ENCODE measurements at regions of chr4 and their contacts with region 1.

Region 1: GRCh38 chr4:44678094-44679041 is at the start of gene GUF1:
- DNase-seq: peak; percentile 79 to 96 (median 82)
- ATAC-seq: peak; percentile 88
- H3K4me3 ChIP-seq: peak within 1 kb of the TSS; percentile 68
- H3K27ac ChIP-seq: peak within 1 kb of the TSS; percentile 82
- H3K4me1 ChIP-seq: peaks cover 0 to 13% of the 10 kb centered on the region in 2 experiments; a peak in 2 of 5 replicates
- H3K27me3 ChIP-seq: no peaks in the 10 kb centered on the region
- CTCF ChIP-seq: no peak
- EP300 ChIP-seq: no peak
- POLR2A ChIP-seq: peak; percentile 94
- RAD21 ChIP-seq: no peak
- polyA plus RNA-seq, gene GUF1: 8.1 to 13.1 TPM

Region 2: GRCh38 chr4:44532851-44533250 is 145.5 kb before region 1 on chr4:
- CTCF ChIA-PET with region 1: no interaction called
- POLR2A ChIA-PET with region 1: no interaction called
- in situ Hi-C with region 1: no loop called
- intact Hi-C with region 1: no loop called
- DNase-seq: no peak
- ATAC-seq: no peak
- H3K4me3 ChIP-seq: no peak overlapping the region
- H3K27ac ChIP-seq: no peak overlapping the region
- H3K4me1 ChIP-seq: no peaks in the 10 kb centered on the region
- H3K27me3 ChIP-seq: no peaks in the 10 kb centered on the region
- CTCF ChIP-seq: no peak
- EP300 ChIP-seq: no peak
- POLR2A ChIP-seq: no peak
- RAD21 ChIP-seq: no peak

Region 3: DNA sequence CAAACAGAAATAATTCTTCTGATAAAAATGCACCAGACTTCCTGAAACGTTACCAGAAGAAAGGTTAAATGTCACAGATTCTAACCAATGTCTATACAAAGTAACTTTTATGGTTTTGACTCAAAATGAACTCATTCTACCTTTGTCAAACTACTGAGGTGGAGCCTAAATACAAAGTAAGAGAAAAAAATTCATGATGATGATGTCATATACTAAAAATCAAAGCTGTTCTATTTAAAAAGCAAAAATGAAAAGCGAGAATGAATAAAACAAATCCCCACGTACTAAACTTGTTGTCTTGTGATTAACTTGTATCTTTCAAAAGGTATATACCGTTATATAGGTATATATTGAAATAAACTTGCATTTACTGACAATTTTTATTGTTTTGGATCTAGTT is 26.3 kb after region 1 on chr4:
- CTCF ChIA-PET with region 1: no interaction called
- POLR2A ChIA-PET with region 1: interaction called, 10 read pairs
- in situ Hi-C with region 1: no loop called
- intact Hi-C with region 1: no loop called
- DNase-seq: no peak
- ATAC-seq: no peak
- H3K4me3 ChIP-seq: no peak overlapping the region
- H3K27ac ChIP-seq: no peak overlapping the region
- H3K4me1 ChIP-seq: no peaks in the 10 kb centered on the region
- H3K27me3 ChIP-seq: no peaks in the 10 kb centered on the region
- CTCF ChIP-seq: no peak
- EP300 ChIP-seq: no peak
- POLR2A ChIP-seq: no peak
- RAD21 ChIP-seq: no peak

Region 4: GRCh38 chr4:44726262-44726871 is 48.0 kb after region 1 on chr4 and contains the start of gene GNPDA2:
- CTCF ChIA-PET with region 1: interaction called, 3 read pairs
- POLR2A ChIA-PET with region 1: interaction called, 3 read pairs
- in situ Hi-C with region 1: no loop called
- intact Hi-C with region 1: loop called (anchors 1 kb)
- DNase-seq: peak; percentile 93 to 96 (median 94)
- ATAC-seq: peak; percentile 92
- H3K4me3 ChIP-seq: peak within 1 kb of the TSS; percentile 68
- H3K27ac ChIP-seq: peak within 1 kb of the TSS; percentile 87
- H3K4me1 ChIP-seq: peaks cover 7 to 9% of the 10 kb centered on the region in 2 experiments; a peak in 4 of 5 replicates
- H3K27me3 ChIP-seq: no peaks in the 10 kb centered on the region
- CTCF ChIP-seq: peak; percentile 6 to 45 (median 30); a peak in 2 of 6 replicates
- EP300 ChIP-seq: no peak
- POLR2A ChIP-seq: peak; percentile 84
- RAD21 ChIP-seq: peak in 1 of 2 experiments; percentile 13; a peak in 1 of 4 replicates
- polyA plus RNA-seq, gene GNPDA2: 19.6 to 20.4 TPM

Region 5: DNA sequence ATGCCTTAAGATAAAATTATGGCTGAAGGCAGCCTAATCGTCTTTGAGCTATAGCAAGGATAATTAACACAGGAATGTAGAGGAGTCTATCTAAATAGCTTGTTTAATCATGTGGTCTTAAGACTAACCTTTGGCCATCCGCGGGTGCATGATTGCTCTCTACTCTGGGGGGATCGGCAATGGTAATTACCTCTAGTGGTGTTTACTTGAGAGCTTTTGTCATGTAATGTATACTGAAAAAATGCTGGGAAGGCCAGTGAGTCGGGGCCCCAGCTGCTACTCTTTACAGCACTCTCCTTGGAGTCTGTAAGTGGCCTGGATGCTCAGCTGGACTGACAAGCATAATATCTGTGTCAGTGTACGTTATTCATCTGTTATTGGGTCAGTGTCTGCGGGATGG is 113.5 kb after region 1 on chr4:
- CTCF ChIA-PET with region 1: no interaction called
- POLR2A ChIA-PET with region 1: no interaction called
- in situ Hi-C with region 1: no loop called
- intact Hi-C with region 1: no loop called
- DNase-seq: no peak
- ATAC-seq: no peak
- H3K4me3 ChIP-seq: no peak overlapping the region
- H3K27ac ChIP-seq: no peak overlapping the region
- H3K4me1 ChIP-seq: no peaks in the 10 kb centered on the region
- H3K27me3 ChIP-seq: no peaks in the 10 kb centered on the region
- CTCF ChIP-seq: no peak
- EP300 ChIP-seq: no peak
- POLR2A ChIP-seq: no peak
- RAD21 ChIP-seq: no peak

Region 6: DNA sequence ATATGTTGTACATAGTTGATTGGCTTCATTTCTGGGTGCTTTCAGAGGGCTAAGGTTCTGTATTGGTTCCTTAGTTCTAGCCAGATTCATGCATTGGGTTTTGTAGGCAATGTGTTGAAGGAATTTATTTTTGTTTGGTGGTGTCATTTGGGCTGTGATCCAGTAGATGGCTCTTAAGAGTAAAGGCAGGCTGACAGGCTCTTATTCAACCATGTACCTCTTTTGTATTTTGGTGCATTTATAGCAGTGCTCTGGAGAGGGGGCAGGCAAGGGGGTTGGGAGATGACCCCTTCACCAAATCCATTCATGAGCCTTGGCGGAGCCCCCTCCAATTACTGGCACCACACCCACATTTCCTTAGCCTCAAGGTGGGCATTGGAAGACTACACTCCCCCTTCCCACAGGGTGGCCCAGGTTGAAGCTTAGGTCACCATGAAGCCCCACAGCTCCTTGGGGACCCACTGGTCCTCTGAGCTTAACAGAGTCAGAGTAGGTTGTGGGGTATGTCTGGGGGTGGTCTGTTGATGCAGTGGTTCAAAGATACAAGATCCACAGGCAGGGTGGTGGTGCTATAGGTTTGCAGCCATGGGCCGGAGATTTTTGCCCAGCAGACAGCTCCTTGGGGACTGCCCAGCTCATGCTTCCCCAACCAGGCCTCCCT is 191.0 kb after region 1 on chr4:
- CTCF ChIA-PET with region 1: no interaction called
- POLR2A ChIA-PET with region 1: no interaction called
- in situ Hi-C with region 1: no loop called
- intact Hi-C with region 1: no loop called
- DNase-seq: no peak
- ATAC-seq: no peak
- H3K4me3 ChIP-seq: no peak overlapping the region
- H3K27ac ChIP-seq: no peak overlapping the region
- H3K4me1 ChIP-seq: no peaks in the 10 kb centered on the region
- H3K27me3 ChIP-seq: no peaks in the 10 kb centered on the region
- CTCF ChIP-seq: no peak
- EP300 ChIP-seq: no peak
- POLR2A ChIP-seq: no peak
- RAD21 ChIP-seq: no peak